ENCODE measurements at regions of chr7 and their contacts with region 1.

Region 1: DNA sequence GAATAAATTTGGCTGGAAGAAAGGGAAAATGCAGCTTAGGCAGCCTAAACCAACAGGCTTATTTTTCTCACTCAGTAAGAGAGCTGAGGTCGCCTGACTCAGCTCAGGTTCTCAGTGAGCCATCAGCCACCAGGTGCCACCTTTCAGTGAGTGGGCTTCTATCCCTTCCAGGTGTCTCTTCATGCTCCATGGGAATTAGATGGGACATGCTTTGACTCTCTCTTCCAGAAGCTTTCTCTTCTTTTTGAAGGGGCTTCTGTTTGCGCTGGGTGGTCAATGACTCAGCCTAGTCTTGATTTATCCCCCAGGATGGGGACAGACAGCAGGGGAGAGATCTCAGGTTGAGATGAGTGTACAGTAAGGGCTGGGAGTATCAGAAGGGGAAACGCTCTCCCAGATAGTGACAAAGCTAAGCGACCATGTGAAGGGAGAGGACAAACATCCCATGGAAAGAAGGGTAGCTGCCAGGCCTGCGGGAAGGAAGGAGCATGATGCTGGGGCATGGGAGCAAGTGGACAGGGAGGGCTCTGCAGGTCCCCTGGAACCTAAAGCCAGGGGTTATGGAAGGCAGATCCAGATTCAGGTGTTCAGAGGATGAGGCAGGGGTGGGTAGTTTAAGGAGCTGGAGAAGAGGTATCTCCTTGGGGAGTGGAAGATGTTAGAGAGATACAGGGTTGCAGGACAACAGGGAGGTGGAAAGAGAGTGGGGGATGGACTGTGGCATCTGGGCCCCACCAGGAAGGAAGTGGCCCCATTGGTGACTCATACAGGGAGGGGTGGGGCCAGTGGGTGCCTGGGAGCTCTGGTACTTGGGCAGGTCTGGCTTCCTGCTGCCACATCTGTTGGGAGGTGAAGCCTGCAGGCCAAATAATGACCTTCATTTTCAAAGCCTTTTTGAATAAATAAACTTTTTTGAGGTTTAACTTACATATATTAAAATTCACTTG is 32.5 kb downstream of the OGDH start:
- DNase-seq: peak; percentile 72 to 91 (median 79)
- H3K4me3 ChIP-seq: peak overlapping the region; percentile 0 to 48
- H3K4me3 Mint-ChIP-seq: peak overlapping the region; percentile 32 to 95 (median 90)
- H3K27ac ChIP-seq: peak overlapping the region; percentile 96
- H3K27ac Mint-ChIP-seq: peak overlapping the region; percentile 97 to 100 (median 100)
- H3K4me1 ChIP-seq: peaks cover 90% of the 10 kb centered on the region
- H3K4me1 Mint-ChIP-seq: peaks cover 57 to 87% (median 79%) of the 10 kb centered on the region in 4 donors
- H3K27me3 ChIP-seq: no peaks in the 10 kb centered on the region
- H3K27me3 Mint-ChIP-seq: no peaks in the 10 kb centered on the region

Region 2: GRCh38 chr7:44534501-44534900 is 104.4 kb before region 1 on chr7:
- CTCF ChIA-PET with region 1: no interaction called
- POLR2A ChIA-PET with region 1: no interaction called
- intact Hi-C with region 1: no loop called
- DNase-seq: peak; percentile 17 to 47 (median 43)
- H3K4me3 ChIP-seq: no peak overlapping the region
- H3K4me3 Mint-ChIP-seq: no peak overlapping the region
- H3K27ac ChIP-seq: no peak overlapping the region
- H3K27ac Mint-ChIP-seq: no peak overlapping the region
- H3K4me1 ChIP-seq: no peaks in the 10 kb centered on the region
- H3K4me1 Mint-ChIP-seq: peaks cover 0 to 3% (median 0%) of the 10 kb centered on the region in 4 donors
- H3K27me3 ChIP-seq: no peaks in the 10 kb centered on the region
- H3K27me3 Mint-ChIP-seq: no peaks in the 10 kb centered on the region

Region 3: GRCh38 chr7:44573464-44574286 is 65.2 kb before region 1 on chr7 and contains the start of gene DDX56:
- CTCF ChIA-PET with region 1: interaction called, 4 read pairs
- POLR2A ChIA-PET with region 1: interaction called, 24 read pairs
- intact Hi-C with region 1: no loop called
- DNase-seq: peak; percentile 87 to 93 (median 88)
- H3K4me3 ChIP-seq: peak within 1 kb of the TSS; percentile 93
- H3K4me3 Mint-ChIP-seq: peak within 1 kb of the TSS; percentile 94 to 99 (median 96)
- H3K27ac ChIP-seq: peak within 1 kb of the TSS; percentile 94
- H3K27ac Mint-ChIP-seq: peak within 1 kb of the TSS; percentile 97 to 99 (median 99)
- H3K4me1 ChIP-seq: peaks cover 30% of the 10 kb centered on the region
- H3K4me1 Mint-ChIP-seq: peaks cover 26 to 41% (median 34%) of the 10 kb centered on the region in 4 donors
- H3K27me3 ChIP-seq: no peaks in the 10 kb centered on the region
- H3K27me3 Mint-ChIP-seq: no peaks in the 10 kb centered on the region
- total RNA-seq, gene DDX56: 109 to 114 TPM

Region 4: DNA sequence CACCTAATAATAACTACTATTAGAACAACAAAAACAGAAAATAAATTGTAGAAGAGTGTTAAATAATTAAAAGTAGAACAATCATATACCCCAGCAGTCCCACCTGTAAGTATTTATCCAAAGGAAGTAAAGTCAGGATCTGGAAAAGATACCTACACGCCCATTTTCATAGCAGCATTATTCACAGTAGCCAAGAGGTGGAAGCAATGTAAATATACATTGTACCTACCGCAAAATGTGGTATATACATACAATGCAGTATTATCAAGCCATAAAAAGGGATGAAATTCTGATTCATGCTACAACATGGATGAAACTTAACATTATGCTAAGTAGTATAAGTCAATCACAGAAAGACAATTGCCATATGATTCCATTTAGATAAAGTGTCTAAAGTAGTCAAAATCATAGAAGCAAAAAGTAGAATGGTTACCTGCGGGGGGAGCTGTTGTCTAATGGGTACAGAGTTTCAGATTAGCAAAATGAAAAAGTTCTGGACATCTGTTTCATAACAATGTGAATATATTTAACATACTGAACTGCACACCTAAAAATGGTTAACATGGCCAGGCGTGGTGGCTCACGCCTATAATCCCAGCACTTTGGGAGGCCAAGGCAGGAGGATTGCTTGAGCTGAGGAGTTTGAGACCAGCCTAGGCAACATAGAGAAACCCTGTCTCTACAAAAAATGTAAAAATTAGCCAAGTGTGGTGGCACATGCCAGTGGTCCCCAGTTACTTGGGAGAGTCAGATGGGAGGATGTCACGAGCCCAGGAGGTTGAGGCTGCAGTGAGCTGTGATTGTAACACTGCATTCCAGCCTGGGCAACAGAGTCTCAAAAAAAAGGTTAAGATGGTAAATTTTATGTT is 50.8 kb before region 1 on chr7:
- CTCF ChIA-PET with region 1: interaction called, 5 read pairs
- POLR2A ChIA-PET with region 1: interaction called, 94 read pairs
- intact Hi-C with region 1: loop called (anchors 1 kb)
- DNase-seq: peak; percentile 65 to 73 (median 71)
- H3K4me3 ChIP-seq: no peak overlapping the region
- H3K4me3 Mint-ChIP-seq: no peak overlapping the region
- H3K27ac ChIP-seq: no peak overlapping the region
- H3K27ac Mint-ChIP-seq: peak overlapping the region in 5 of 7 donors; percentile 42 to 86 (median 68)
- H3K4me1 ChIP-seq: peaks cover 2% of the 10 kb centered on the region
- H3K4me1 Mint-ChIP-seq: peaks cover 5 to 16% (median 9%) of the 10 kb centered on the region in 4 donors
- H3K27me3 ChIP-seq: no peaks in the 10 kb centered on the region
- H3K27me3 Mint-ChIP-seq: no peaks in the 10 kb centered on the region

Region 5: GRCh38 chr7:44615149-44615611 is 23.7 kb before region 1 on chr7:
- CTCF ChIA-PET with region 1: interaction called, 48 read pairs
- POLR2A ChIA-PET with region 1: interaction called, 1,226 read pairs
- intact Hi-C with region 1: loop called (anchors 1 kb)
- DNase-seq: peak in 3 of 5 donors; percentile 38 to 72 (median 44)
- H3K4me3 ChIP-seq: no peak overlapping the region
- H3K4me3 Mint-ChIP-seq: peak overlapping the region; percentile 63 to 86 (median 72)
- H3K27ac ChIP-seq: peak overlapping the region; percentile 48
- H3K27ac Mint-ChIP-seq: peak overlapping the region; percentile 75 to 95 (median 93)
- H3K4me1 ChIP-seq: peaks cover 70% of the 10 kb centered on the region
- H3K4me1 Mint-ChIP-seq: peaks cover 52 to 79% (median 64%) of the 10 kb centered on the region in 4 donors
- H3K27me3 ChIP-seq: no peaks in the 10 kb centered on the region
- H3K27me3 Mint-ChIP-seq: no peaks in the 10 kb centered on the region

Region 6: GRCh38 chr7:44654255-44654796 is 15.4 kb after region 1 on chr7:
- CTCF ChIA-PET with region 1: interaction called, 6 read pairs
- POLR2A ChIA-PET with region 1: interaction called, 21 read pairs
- intact Hi-C with region 1: no loop called
- DNase-seq: no peak
- H3K4me3 ChIP-seq: no peak overlapping the region
- H3K4me3 Mint-ChIP-seq: no peak overlapping the region
- H3K27ac ChIP-seq: no peak overlapping the region
- H3K27ac Mint-ChIP-seq: peak overlapping the region in 3 of 7 donors; percentile 11 to 81 (median 57)
- H3K4me1 ChIP-seq: no peaks in the 10 kb centered on the region
- H3K4me1 Mint-ChIP-seq: peaks cover 3 to 9% (median 5%) of the 10 kb centered on the region in 4 donors
- H3K27me3 ChIP-seq: no peaks in the 10 kb centered on the region
- H3K27me3 Mint-ChIP-seq: no peaks in the 10 kb centered on the region

Measured in CD4-positive, alpha-beta memory T cell (primary cell).